Activated CD4-positive, alpha-beta memory T cell treated with anti-CD3 and anti-CD28 coated beads for 36 hours (primary cell): ENCODE measurements at regions of chr2 and their contacts with region 1.

Region 1: GRCh38 chr2:27086090-27086723 is 365 bp upstream of the KHK start:
- DNase-seq: peak; percentile 99
- H3K4me3 Mint-ChIP-seq: peak overlapping the region; percentile 81
- H3K27ac Mint-ChIP-seq: peak overlapping the region; percentile 73
- H3K4me1 Mint-ChIP-seq: peaks cover 19% of the 10 kb centered on the region
- H3K27me3 Mint-ChIP-seq: no peaks in the 10 kb centered on the region

Region 2: GRCh38 chr2:26970244-26970920 is 115.8 kb before region 1 on chr2 and contains the start of gene MAPRE3:
- CTCF ChIA-PET with region 1: no interaction called
- POLR2A ChIA-PET with region 1: no interaction called
- intact Hi-C with region 1: loop called (anchors 1 kb)
- DNase-seq: peak; percentile 85
- H3K4me3 Mint-ChIP-seq: peak within 1 kb of the TSS; percentile 73
- H3K27ac Mint-ChIP-seq: no peak within 1 kb of the TSS
- H3K4me1 Mint-ChIP-seq: peaks cover 15% of the 10 kb centered on the region
- H3K27me3 Mint-ChIP-seq: peaks cover 17% of the 10 kb centered on the region
- total RNA-seq, gene MAPRE3: 4.4 TPM

Region 3: DNA sequence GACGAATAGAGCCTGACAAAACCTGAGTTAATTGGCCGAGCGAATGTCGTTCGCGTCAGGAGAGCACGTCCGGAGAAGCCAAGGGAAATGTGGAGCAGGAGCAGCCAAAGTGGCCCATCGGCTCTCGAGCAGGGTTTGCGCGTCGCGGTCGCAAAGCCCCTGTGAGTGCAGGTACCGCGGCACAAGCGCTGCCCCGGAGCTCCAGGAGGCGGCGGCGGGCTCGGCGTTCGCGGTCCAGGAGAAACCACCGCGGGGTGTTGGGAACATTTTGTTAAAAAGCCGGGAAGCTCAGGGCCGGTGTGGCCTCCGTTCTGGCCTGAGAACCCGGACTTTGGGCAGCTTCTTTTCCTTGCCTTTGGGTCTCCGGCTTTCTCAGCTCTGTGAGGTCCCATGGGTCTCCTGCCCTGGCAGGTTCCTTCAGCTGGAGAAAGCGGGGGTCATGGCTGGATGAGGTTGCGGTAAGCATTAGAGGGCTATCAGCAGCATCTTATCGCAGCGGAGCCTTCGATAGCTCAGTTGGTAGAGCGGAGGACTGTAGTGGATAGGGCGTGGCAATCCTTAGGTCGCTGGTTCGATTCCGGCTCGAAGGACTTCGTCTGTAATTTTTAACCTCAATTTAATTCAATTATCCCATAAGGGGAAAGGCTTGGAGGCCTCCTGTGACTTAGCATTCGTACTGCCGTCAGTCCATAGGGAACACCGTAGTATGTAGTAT is 35.8 kb before region 1 on chr2:
- CTCF ChIA-PET with region 1: interaction called, 12 read pairs
- POLR2A ChIA-PET with region 1: interaction called, 19 read pairs
- intact Hi-C with region 1: loop called (anchors 1 kb)
- DNase-seq: peak; percentile 97
- H3K4me3 Mint-ChIP-seq: peak overlapping the region; percentile 98
- H3K27ac Mint-ChIP-seq: peak overlapping the region; percentile 100
- H3K4me1 Mint-ChIP-seq: peaks cover 18% of the 10 kb centered on the region
- H3K27me3 Mint-ChIP-seq: peaks cover 8% of the 10 kb centered on the region

Region 4: GRCh38 chr2:27133905-27134780 is 47.9 kb after region 1 on chr2 and contains the start of gene PREB:
- CTCF ChIA-PET with region 1: no interaction called
- POLR2A ChIA-PET with region 1: interaction called, 3 read pairs
- intact Hi-C with region 1: loop called (anchors 5 kb)
- DNase-seq: peak; percentile 98
- H3K4me3 Mint-ChIP-seq: peak within 1 kb of the TSS; percentile 89
- H3K27ac Mint-ChIP-seq: peak within 1 kb of the TSS; percentile 86
- H3K4me1 Mint-ChIP-seq: peaks cover 20% of the 10 kb centered on the region
- H3K27me3 Mint-ChIP-seq: no peaks in the 10 kb centered on the region
- total RNA-seq, gene PREB: 64.7 to 65.4 TPM